Naive thymus-derived CD4-positive, alpha-beta T cell (primary cell): ENCODE measurements at regions of chr11 and their contacts with region 1.

Region 1: GRCh38 chr11:123246749-123247495 is 51.9 kb upstream of the CLMP start:
- DNase-seq: peak; percentile 62 to 85 (median 77)
- ATAC-seq: peak; percentile 93
- H3K4me3 ChIP-seq: no peak overlapping the region
- H3K4me3 Mint-ChIP-seq: peak overlapping the region in 6 of 10 donors; percentile 39 to 66 (median 49)
- H3K27ac ChIP-seq: no peak overlapping the region
- H3K27ac Mint-ChIP-seq: no peak overlapping the region
- H3K4me1 ChIP-seq: no peaks in the 10 kb centered on the region
- H3K4me1 Mint-ChIP-seq: peaks cover 0 to 13% (median 5%) of the 10 kb centered on the region in 7 donors
- H3K27me3 ChIP-seq: no peaks in the 10 kb centered on the region
- H3K27me3 Mint-ChIP-seq: peaks cover 5 to 47% (median 12%) of the 10 kb centered on the region in 5 donors

Region 2: DNA sequence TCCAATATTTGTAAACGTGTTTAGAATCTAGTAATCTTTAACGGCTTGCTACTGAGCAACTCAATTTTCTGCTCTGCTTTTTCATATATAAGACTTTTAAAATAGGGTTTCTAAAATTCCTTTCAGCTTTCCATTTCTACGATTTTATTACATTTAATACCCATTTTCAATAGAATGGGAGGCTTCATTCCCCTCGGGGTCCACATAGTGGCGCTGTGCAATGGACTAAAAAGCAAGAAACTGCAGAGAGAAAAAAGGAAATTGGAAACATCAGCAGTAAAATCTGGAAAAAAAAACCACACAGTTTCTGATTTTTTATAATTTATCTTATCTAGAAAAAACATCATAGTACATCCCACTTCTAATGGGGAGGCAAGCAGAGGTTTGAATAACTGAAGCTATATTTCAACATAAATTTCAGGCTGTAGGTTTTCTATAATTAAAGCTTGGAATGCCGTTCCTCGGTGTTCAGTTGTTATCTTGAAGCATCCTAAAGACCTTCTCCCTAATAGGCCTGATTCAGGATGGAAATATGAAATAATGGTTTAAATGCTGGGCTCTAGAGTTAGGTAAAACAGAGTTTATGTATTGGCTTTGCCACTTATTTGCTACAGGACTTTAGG is 383.1 kb before region 1 on chr11:
- CTCF ChIA-PET with region 1: interaction called, 4 read pairs
- POLR2A ChIA-PET with region 1: no interaction called
- intact Hi-C with region 1: loop called (anchors 1 to 10 kb)
- DNase-seq: peak in 6 of 9 donors; percentile 19 to 51 (median 40)
- ATAC-seq: peak; percentile 60
- H3K4me3 ChIP-seq: no peak overlapping the region
- H3K4me3 Mint-ChIP-seq: no peak overlapping the region
- H3K27ac ChIP-seq: no peak overlapping the region
- H3K27ac Mint-ChIP-seq: no peak overlapping the region
- H3K4me1 ChIP-seq: no peaks in the 10 kb centered on the region
- H3K4me1 Mint-ChIP-seq: peaks cover 0 to 2% (median 0%) of the 10 kb centered on the region in 7 donors
- H3K27me3 ChIP-seq: no peaks in the 10 kb centered on the region
- H3K27me3 Mint-ChIP-seq: peaks cover 0 to 49% (median 0%) of the 10 kb centered on the region in 5 donors

Region 3: GRCh38 chr11:123054301-123055065 is 192.4 kb before region 1 on chr11:
- CTCF ChIA-PET with region 1: interaction called, 17 read pairs
- POLR2A ChIA-PET with region 1: no interaction called
- intact Hi-C with region 1: loop called (anchors 1 kb)
- DNase-seq: peak in 7 of 9 donors; percentile 52 to 75 (median 67)
- ATAC-seq: peak; percentile 87
- H3K4me3 ChIP-seq: peak overlapping the region; percentile 11
- H3K4me3 Mint-ChIP-seq: peak overlapping the region in 9 of 10 donors; percentile 20 to 100 (median 65)
- H3K27ac ChIP-seq: peak overlapping the region; percentile 38
- H3K27ac Mint-ChIP-seq: peak overlapping the region; percentile 69 to 100 (median 92)
- H3K4me1 ChIP-seq: peaks cover 50 to 56% of the 10 kb centered on the region in 2 donors
- H3K4me1 Mint-ChIP-seq: peaks cover 42 to 60% (median 55%) of the 10 kb centered on the region in 7 donors
- H3K27me3 ChIP-seq: no peaks in the 10 kb centered on the region
- H3K27me3 Mint-ChIP-seq: no peaks in the 10 kb centered on the region

Region 4: GRCh38 chr11:123110356-123110755 is 136.6 kb before region 1 on chr11:
- CTCF ChIA-PET with region 1: interaction called, 48 read pairs
- POLR2A ChIA-PET with region 1: no interaction called
- intact Hi-C with region 1: loop called (anchors 1 kb)
- DNase-seq: no peak
- ATAC-seq: no peak
- H3K4me3 ChIP-seq: peak overlapping the region; percentile 21
- H3K4me3 Mint-ChIP-seq: peak overlapping the region in 7 of 10 donors; percentile 4 to 47 (median 25)
- H3K27ac ChIP-seq: no peak overlapping the region
- H3K27ac Mint-ChIP-seq: peak overlapping the region; percentile 9 to 80 (median 58)
- H3K4me1 ChIP-seq: no peaks in the 10 kb centered on the region
- H3K4me1 Mint-ChIP-seq: peaks cover 0 to 11% (median 6%) of the 10 kb centered on the region in 7 donors
- H3K27me3 ChIP-seq: no peaks in the 10 kb centered on the region
- H3K27me3 Mint-ChIP-seq: peaks cover 0 to 31% (median 0%) of the 10 kb centered on the region in 5 donors

Region 5: GRCh38 chr11:123478352-123478987 is 231.5 kb after region 1 on chr11:
- CTCF ChIA-PET with region 1: no interaction called
- POLR2A ChIA-PET with region 1: no interaction called
- intact Hi-C with region 1: loop called in 1 of 2 experiments (anchors 5 kb)
- DNase-seq: peak in 7 of 9 donors; percentile 27 to 61 (median 50)
- ATAC-seq: peak; percentile 64
- H3K4me3 ChIP-seq: no peak overlapping the region
- H3K4me3 Mint-ChIP-seq: peak overlapping the region in 1 of 10 donors; percentile 39
- H3K27ac ChIP-seq: no peak overlapping the region
- H3K27ac Mint-ChIP-seq: peak overlapping the region in 1 of 9 donors; percentile 30
- H3K4me1 ChIP-seq: no peaks in the 10 kb centered on the region
- H3K4me1 Mint-ChIP-seq: peaks cover 0 to 59% (median 5%) of the 10 kb centered on the region in 7 donors
- H3K27me3 ChIP-seq: no peaks in the 10 kb centered on the region
- H3K27me3 Mint-ChIP-seq: no peaks in the 10 kb centered on the region